Upper lobe of right lung (tissue), 1 donor: ENCODE measurements at regions of chr1 and their contacts with region 1.

Region 1: GRCh38 chr1:200488375-200489165 is 78.7 kb upstream of the ZNF281 start:
- DNase-seq: no peak
- ATAC-seq: peak; percentile 92
- H3K4me3 ChIP-seq: no peak overlapping the region
- H3K27ac ChIP-seq: no peak overlapping the region
- H3K4me1 ChIP-seq: peaks cover 4% of the 10 kb centered on the region
- H3K27me3 ChIP-seq: no peaks in the 10 kb centered on the region
- CTCF ChIP-seq: peak; percentile 86

Region 2: DNA sequence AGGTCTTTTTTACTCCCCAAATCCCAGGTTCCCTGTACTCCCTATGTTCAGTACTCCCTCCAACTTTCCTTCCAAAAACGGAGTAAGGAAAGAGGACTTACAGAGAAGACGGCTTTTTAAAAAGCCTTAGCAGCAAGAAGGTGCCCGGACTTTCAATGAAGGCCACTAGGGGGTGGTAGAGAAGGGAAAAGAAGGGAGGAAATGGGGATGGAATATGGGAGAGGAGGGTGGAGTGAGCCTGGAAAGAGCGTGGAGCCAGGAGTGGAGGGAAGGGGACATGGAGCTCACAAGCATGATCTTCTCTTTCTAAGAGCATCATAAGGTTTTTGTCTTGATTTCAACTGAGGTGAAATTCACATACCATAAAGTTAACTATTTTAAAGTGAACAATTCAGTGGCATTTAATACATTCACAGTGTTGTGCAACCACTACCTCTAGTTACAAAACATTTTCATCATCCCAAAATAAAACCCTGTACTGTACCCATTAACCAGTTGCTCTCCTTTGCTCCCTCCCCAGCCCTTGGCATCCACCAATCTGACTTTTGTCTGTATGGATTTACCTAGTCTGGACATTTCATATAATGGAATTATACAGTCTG is 208.7 kb before region 1 on chr1:
- intact Hi-C with region 1: loop called (anchors 10 kb)
- DNase-seq: no peak
- ATAC-seq: peak; percentile 94
- H3K4me3 ChIP-seq: no peak overlapping the region
- H3K27ac ChIP-seq: no peak overlapping the region
- H3K4me1 ChIP-seq: no peaks in the 10 kb centered on the region
- H3K27me3 ChIP-seq: no peaks in the 10 kb centered on the region
- CTCF ChIP-seq: peak; percentile 71